ENCODE measurements at regions of chr4 and their contacts with region 1.

Region 1: DNA sequence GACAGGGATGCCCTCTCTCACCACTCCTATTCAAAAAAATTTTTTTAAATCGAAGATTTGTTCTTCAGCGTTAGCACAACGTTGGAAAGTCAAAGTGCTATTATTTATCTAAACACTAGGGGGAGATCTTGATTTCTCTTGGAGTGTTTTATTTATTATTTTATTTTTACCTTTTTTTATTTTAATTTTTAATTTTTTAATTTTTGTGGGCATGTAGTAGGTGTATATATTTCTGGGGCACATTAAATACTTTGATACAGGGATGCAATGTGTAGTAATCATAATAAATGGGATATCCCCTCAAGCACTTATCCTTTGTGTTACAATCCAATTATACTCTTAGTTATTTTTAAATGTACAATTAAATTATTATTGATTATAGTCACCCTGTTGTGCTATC is 37.4 kb upstream of the SLC10A4 start:
- DNase-seq: no peak
- H3K4me3 ChIP-seq: no peak overlapping the region
- H3K27ac ChIP-seq: no peak overlapping the region
- H3K4me1 ChIP-seq: no peaks in the 10 kb centered on the region
- H3K27me3 ChIP-seq: no peaks in the 10 kb centered on the region
- CTCF ChIP-seq: peak in 3 of 4 experiments; percentile 34 to 46 (median 40)
- POLR2A ChIP-seq: no peak

Region 2: GRCh38 chr4:48546336-48546735 is 100.6 kb after region 1 on chr4:
- intact Hi-C with region 1: loop called (anchors 10 kb)
- DNase-seq: no peak
- H3K4me3 ChIP-seq: no peak overlapping the region
- H3K27ac ChIP-seq: no peak overlapping the region
- H3K4me1 ChIP-seq: no peaks in the 10 kb centered on the region
- H3K27me3 ChIP-seq: no peaks in the 10 kb centered on the region
- CTCF ChIP-seq: peak in 3 of 4 experiments; percentile 39 to 61 (median 53)
- POLR2A ChIP-seq: no peak

Region 3: GRCh38 chr4:48963042-48963679 is 517.5 kb after region 1 on chr4:
- intact Hi-C with region 1: loop called (anchors 5 kb)
- DNase-seq: peak; percentile 62
- H3K4me3 ChIP-seq: no peak overlapping the region
- H3K27ac ChIP-seq: no peak overlapping the region
- H3K4me1 ChIP-seq: no peaks in the 10 kb centered on the region
- H3K27me3 ChIP-seq: no peaks in the 10 kb centered on the region
- CTCF ChIP-seq: peak; percentile 83 to 93 (median 87)
- POLR2A ChIP-seq: no peak

Measured in prostate gland (tissue), 2 donors.